ENCODE measurements at regions of chr2 and their contacts with region 1.

Region 1: DNA sequence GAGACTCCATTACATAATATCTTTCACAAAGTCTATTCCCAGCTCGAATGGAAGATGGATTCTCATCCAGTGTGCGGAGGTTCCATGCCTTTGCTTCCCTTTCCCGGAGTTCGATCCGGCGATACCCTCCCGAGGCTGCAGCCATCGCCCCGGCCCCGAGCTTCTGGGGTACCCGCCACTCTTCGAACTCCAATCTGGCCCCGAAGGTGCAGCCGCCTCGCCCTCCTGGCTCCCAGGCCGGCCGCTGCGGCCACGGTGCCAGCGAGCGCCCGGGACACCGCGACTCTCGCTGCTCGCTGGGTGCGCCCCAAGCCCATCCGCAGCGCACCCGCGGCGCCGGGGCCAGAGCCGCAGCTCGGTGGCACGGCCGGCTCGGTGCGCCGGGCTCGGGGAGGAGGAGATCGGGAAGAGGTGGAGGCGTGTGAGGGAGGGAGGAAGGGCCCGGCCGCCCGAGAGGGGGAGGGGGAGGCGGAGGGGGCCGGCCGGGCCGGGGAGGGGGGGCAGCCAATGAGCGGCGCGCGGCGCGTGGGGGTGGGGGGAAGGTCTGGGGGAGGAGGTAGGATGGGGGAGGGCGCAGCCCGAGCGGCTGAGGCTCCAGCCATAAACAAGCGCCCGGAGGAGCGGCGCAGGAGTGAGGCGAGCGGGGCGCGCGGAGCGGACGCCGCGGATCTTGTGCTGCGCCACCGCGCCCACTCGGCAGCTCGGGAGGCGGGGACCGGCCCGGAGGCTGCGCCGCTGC is at the start of gene CRIM1:
- DNase-seq: peak; percentile 28 to 50 (median 38)
- H3K4me3 ChIP-seq: peak within 1 kb of the TSS in 1 of 2 donors; percentile 36
- H3K4me3 Mint-ChIP-seq: peak within 1 kb of the TSS; percentile 80 to 89 (median 85)
- H3K27ac ChIP-seq: no peak within 1 kb of the TSS
- H3K27ac Mint-ChIP-seq: peak within 1 kb of the TSS in 3 of 7 donors; percentile 1 to 25 (median 20)
- H3K4me1 ChIP-seq: peaks cover 28% of the 10 kb centered on the region
- H3K4me1 Mint-ChIP-seq: peaks cover 24 to 46% (median 33%) of the 10 kb centered on the region in 4 donors
- H3K27me3 ChIP-seq: peaks cover 5% of the 10 kb centered on the region
- H3K27me3 Mint-ChIP-seq: peaks cover 13 to 14% of the 10 kb centered on the region in 2 donors
- total RNA-seq, gene CRIM1: 6.8 to 12.0 TPM

Region 2: GRCh38 chr2:35973132-35973736 is 382.1 kb before region 1 on chr2:
- CTCF ChIA-PET with region 1: interaction called, 3 read pairs
- POLR2A ChIA-PET with region 1: no interaction called
- intact Hi-C with region 1: loop called (anchors 2 kb)
- DNase-seq: peak in 3 of 5 donors; percentile 5 to 13 (median 8)
- H3K4me3 ChIP-seq: no peak overlapping the region
- H3K4me3 Mint-ChIP-seq: no peak overlapping the region
- H3K27ac ChIP-seq: no peak overlapping the region
- H3K27ac Mint-ChIP-seq: no peak overlapping the region
- H3K4me1 ChIP-seq: peaks cover 16% of the 10 kb centered on the region
- H3K4me1 Mint-ChIP-seq: peaks cover 0 to 5% (median 2%) of the 10 kb centered on the region in 4 donors
- H3K27me3 ChIP-seq: no peaks in the 10 kb centered on the region
- H3K27me3 Mint-ChIP-seq: peaks cover 1 to 4% of the 10 kb centered on the region in 2 donors

Region 3: GRCh38 chr2:36333350-36333972 is 21.9 kb before region 1 on chr2:
- CTCF ChIA-PET with region 1: interaction called, 10 read pairs
- POLR2A ChIA-PET with region 1: no interaction called
- intact Hi-C with region 1: no loop called
- DNase-seq: peak in 2 of 5 donors; percentile 13 to 14
- H3K4me3 ChIP-seq: no peak overlapping the region
- H3K4me3 Mint-ChIP-seq: no peak overlapping the region
- H3K27ac ChIP-seq: no peak overlapping the region
- H3K27ac Mint-ChIP-seq: no peak overlapping the region
- H3K4me1 ChIP-seq: no peaks in the 10 kb centered on the region
- H3K4me1 Mint-ChIP-seq: peaks cover 0 to 7% (median 5%) of the 10 kb centered on the region in 4 donors
- H3K27me3 ChIP-seq: no peaks in the 10 kb centered on the region
- H3K27me3 Mint-ChIP-seq: no peaks in the 10 kb centered on the region

Region 4: GRCh38 chr2:36663851-36664695 is 308.8 kb after region 1 on chr2:
- CTCF ChIA-PET with region 1: interaction called, 19 read pairs
- POLR2A ChIA-PET with region 1: no interaction called
- intact Hi-C with region 1: loop called (anchors 1 kb)
- DNase-seq: peak in 4 of 5 donors; percentile 27 to 46 (median 40)
- H3K4me3 ChIP-seq: no peak overlapping the region
- H3K4me3 Mint-ChIP-seq: no peak overlapping the region
- H3K27ac ChIP-seq: no peak overlapping the region
- H3K27ac Mint-ChIP-seq: no peak overlapping the region
- H3K4me1 ChIP-seq: no peaks in the 10 kb centered on the region
- H3K4me1 Mint-ChIP-seq: no peaks in the 10 kb centered on the region
- H3K27me3 ChIP-seq: no peaks in the 10 kb centered on the region
- H3K27me3 Mint-ChIP-seq: peaks cover 4 to 8% of the 10 kb centered on the region in 2 donors

Region 5: DNA sequence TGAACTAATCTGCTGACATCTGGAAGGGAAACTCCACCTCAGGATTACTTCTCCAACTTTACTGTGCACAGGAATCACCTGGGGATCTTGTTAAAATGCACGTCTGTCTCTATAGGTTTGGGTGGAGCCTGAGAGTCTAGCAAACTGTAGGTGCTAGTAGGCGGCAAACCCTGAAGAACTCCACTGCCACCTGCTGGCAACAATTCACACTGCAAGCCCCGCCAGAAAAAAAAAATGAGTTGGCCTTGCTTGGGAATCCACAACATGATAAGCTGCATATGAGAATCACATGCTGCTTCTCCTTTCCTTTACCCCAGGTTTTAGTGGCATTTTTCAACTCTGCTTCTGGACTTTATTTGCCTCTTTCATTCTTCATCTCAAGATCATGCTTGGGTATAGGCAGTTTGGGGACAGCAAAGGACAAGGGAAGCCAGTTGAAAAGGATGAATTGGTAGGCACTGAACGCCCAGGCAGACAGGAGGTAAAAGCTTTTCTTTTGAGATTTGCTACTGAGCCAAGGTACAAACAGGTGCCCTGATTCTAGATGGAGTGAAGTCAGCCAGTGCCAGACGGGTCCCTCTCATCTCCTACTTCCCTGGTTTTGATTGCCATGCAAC is 430.0 kb after region 1 on chr2:
- CTCF ChIA-PET with region 1: interaction called, 8 read pairs
- POLR2A ChIA-PET with region 1: no interaction called
- intact Hi-C with region 1: loop called (anchors 5 kb)
- DNase-seq: peak; percentile 40 to 66 (median 55)
- H3K4me3 ChIP-seq: no peak overlapping the region
- H3K4me3 Mint-ChIP-seq: no peak overlapping the region
- H3K27ac ChIP-seq: no peak overlapping the region
- H3K27ac Mint-ChIP-seq: peak overlapping the region in 1 of 7 donors; percentile 13
- H3K4me1 ChIP-seq: no peaks in the 10 kb centered on the region
- H3K4me1 Mint-ChIP-seq: peaks cover 0 to 3% (median 1%) of the 10 kb centered on the region in 4 donors
- H3K27me3 ChIP-seq: no peaks in the 10 kb centered on the region
- H3K27me3 Mint-ChIP-seq: peaks cover 17 to 20% of the 10 kb centered on the region in 2 donors